Esophagus muscularis mucosa (tissue), 4 donors: ENCODE measurements at regions of chr15 and their contacts with region 1.

Region 1: DNA sequence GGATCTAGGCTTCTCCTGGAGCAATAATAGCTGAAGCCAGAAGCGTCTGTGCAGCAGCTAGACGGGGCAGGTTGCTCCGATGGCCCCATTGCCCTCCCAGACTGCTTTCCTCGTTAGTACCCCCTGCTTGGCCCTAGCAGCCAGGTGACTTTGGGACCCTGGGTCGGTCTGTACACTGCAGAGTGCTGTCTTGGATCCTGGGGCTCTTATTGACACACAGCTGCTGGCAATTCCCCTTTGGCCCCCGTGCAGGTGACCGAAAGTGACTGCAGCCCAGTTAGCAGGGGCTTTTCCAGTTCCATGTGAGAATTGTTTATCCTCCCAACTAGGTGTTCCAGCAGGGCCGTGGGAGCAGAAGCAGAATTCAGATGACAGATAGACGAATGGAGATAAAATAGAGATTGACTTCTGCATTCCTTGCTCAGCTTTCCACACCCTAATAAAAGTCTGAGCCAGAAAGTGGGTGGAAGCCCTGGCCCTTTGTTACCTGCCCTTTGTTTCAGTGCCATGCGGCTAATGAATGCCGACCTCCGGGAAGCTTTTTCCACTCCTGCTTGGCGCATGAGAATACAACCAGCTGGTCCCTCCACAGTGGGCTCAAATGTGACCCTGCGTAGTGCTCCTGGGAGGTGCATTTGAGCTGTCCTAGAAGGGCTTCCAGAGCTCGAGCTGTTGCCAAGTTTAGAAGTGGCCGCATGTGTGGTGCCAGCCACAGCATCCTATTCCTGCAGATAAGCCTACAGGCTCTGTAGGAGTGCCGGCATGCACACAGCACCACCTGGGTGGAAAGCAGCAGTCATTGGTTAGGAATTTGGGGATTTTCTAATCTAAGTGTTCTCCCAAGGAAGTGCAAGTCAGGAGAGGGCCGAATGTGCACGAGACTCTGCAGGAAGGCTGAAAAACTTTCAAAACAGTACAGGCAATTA is 94.4 kb downstream of the SLCO3A1 start:
- DNase-seq: no peak
- H3K4me3 ChIP-seq: no peak overlapping the region
- H3K27ac ChIP-seq: peak overlapping the region in 2 of 4 donors; percentile 12 to 50
- H3K4me1 ChIP-seq: peaks cover 40 to 60% (median 48%) of the 10 kb centered on the region in 4 donors
- H3K27me3 ChIP-seq: no peaks in the 10 kb centered on the region
- CTCF ChIP-seq: no peak
- EP300 ChIP-seq: no peak
- POLR2A ChIP-seq: no peak

Region 2: GRCh38 chr15:92021792-92022191 is 73.8 kb after region 1 on chr15:
- intact Hi-C with region 1: loop called (anchors 2 kb)
- DNase-seq: no peak
- H3K4me3 ChIP-seq: no peak overlapping the region
- H3K27ac ChIP-seq: no peak overlapping the region
- H3K4me1 ChIP-seq: peaks cover 12 to 41% (median 26%) of the 10 kb centered on the region in 4 donors
- H3K27me3 ChIP-seq: no peaks in the 10 kb centered on the region
- CTCF ChIP-seq: no peak
- EP300 ChIP-seq: no peak
- POLR2A ChIP-seq: no peak